ENCODE measurements at regions of chr4 and their contacts with region 1.

Region 1: GRCh38 chr4:168183717-168184608 is 91.6 kb downstream of the ANXA10 start:
- DNase-seq: peak; percentile 43
- ATAC-seq: peak; percentile 68
- H3K4me3 ChIP-seq: no peak overlapping the region
- H3K27ac ChIP-seq: peak overlapping the region; percentile 52; the same call in 1 of the 2 replicates
- H3K4me1 ChIP-seq: peaks cover 0 to 6% of the 10 kb centered on the region in 2 experiments; a peak in 2 of 4 replicates
- H3K27me3 ChIP-seq: no peaks in the 10 kb centered on the region
- CTCF ChIP-seq: peak; percentile 46 to 80 (median 73)
- POLR2A ChIP-seq: no peak
- RAD21 ChIP-seq: peak; percentile 90

Region 2: DNA sequence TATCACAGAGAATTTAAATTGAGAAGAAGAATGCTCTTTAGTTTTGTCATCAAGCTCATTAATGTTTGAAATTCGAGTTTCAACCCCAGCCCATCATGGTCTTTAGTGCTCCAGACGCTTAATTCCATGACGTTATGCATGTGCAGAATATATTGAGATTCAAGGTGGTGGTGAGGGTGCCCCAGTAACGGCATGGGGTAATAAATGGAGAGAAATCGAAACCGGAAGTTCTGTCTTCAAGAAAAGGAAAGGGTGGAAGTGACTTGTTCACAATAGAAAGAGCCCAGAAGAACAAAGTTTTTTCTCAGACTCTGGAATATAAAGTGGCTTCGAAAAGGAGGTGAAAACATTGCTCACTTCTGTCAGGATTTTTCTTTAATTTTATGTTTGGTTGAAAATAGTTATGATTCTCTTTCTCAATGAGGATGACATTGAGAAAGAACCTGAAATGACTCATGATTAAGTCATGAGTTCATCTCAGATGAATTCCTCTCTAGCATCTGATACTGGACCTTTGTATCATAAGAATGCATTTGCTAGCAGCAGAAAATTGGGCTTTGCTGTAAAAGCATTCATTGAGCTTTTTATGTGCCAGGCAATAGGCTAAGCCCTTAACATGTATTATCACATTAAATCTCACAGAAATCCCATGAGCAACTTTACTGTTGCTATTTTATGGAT is 297.1 kb after region 1 on chr4:
- CTCF ChIA-PET with region 1: no interaction called
- POLR2A ChIA-PET with region 1: no interaction called
- RAD21 ChIA-PET with region 1: no interaction called
- intact Hi-C with region 1: loop called (anchors 10 kb)
- DNase-seq: peak; percentile 70
- ATAC-seq: peak; percentile 66
- H3K4me3 ChIP-seq: peak overlapping the region; percentile 49 to 63
- H3K27ac ChIP-seq: peak overlapping the region; percentile 97
- H3K4me1 ChIP-seq: peaks cover 64 to 95% of the 10 kb centered on the region in 2 experiments
- H3K27me3 ChIP-seq: no peaks in the 10 kb centered on the region
- CTCF ChIP-seq: no peak
- POLR2A ChIP-seq: no peak
- RAD21 ChIP-seq: no peak

Region 3: GRCh38 chr4:168551945-168552695 is 368.2 kb after region 1 on chr4:
- CTCF ChIA-PET with region 1: no interaction called
- POLR2A ChIA-PET with region 1: no interaction called
- RAD21 ChIA-PET with region 1: no interaction called
- intact Hi-C with region 1: loop called (anchors 2 kb)
- DNase-seq: peak; percentile 59
- ATAC-seq: peak; percentile 59
- H3K4me3 ChIP-seq: no peak overlapping the region
- H3K27ac ChIP-seq: peak overlapping the region; percentile 89; the same call in 1 of the 2 replicates
- H3K4me1 ChIP-seq: peaks cover 62 to 86% of the 10 kb centered on the region in 2 experiments
- H3K27me3 ChIP-seq: no peaks in the 10 kb centered on the region
- CTCF ChIP-seq: peak; percentile 20 to 55 (median 48); a peak in 5 of 6 replicates
- POLR2A ChIP-seq: no peak
- RAD21 ChIP-seq: peak; percentile 76

Region 4: DNA sequence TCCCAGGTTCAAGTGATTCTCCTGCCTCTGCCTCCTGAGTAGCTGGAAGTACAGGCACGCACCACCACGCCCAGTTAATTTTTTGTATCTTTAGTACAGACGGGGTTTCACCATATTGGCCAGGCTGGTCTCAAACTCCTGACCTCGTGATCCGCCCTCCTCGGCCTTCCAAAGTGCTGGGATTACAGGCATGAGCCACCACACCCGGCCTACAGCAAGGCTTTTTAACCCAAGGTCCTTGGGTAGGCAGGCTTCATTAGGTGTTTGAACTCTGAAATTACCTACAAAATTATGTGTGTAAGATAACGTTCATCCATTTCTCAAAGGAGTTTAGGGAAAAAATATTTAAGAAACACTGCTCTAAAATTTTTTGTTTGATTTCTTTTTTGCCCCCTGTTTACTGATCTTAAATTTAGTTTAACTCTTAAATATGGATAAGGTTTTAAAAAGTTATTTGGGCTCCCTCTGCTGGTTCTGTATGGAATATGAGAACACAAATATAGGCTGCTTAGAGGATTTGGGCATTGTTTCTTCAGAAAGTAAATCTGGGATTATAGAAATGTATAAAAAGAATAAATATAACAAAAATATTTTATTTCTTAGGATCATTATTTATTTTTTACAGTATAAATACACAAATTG is 733.3 kb after region 1 on chr4:
- CTCF ChIA-PET with region 1: interaction called, 5 read pairs
- POLR2A ChIA-PET with region 1: no interaction called
- RAD21 ChIA-PET with region 1: no interaction called
- intact Hi-C with region 1: loop called (anchors 1 kb)
- DNase-seq: peak; percentile 22
- ATAC-seq: peak; percentile 68
- H3K4me3 ChIP-seq: no peak overlapping the region
- H3K27ac ChIP-seq: peak overlapping the region; percentile 25; the same call in 1 of the 2 replicates
- H3K4me1 ChIP-seq: peaks cover 0 to 6% of the 10 kb centered on the region in 2 experiments; a peak in 2 of 4 replicates
- H3K27me3 ChIP-seq: no peaks in the 10 kb centered on the region
- CTCF ChIP-seq: peak; percentile 44 to 56 (median 54); a peak in 5 of 6 replicates
- POLR2A ChIP-seq: no peak
- RAD21 ChIP-seq: peak; percentile 76